CD4-positive, alpha-beta T cell (primary cell): ENCODE measurements at regions of chr16 and their contacts with region 1.

Region 1: GRCh38 chr16:86554917-86555703 is at the start of gene MTHFSD:
- DNase-seq: peak; percentile 90 to 99 (median 96)
- ATAC-seq: peak; percentile 93
- H3K4me3 ChIP-seq: peak within 1 kb of the TSS; percentile 96
- H3K4me3 Mint-ChIP-seq: peak within 1 kb of the TSS; percentile 99
- H3K27ac ChIP-seq: peak within 1 kb of the TSS; percentile 77 to 93
- H3K27ac Mint-ChIP-seq: peak within 1 kb of the TSS; percentile 99
- H3K4me1 ChIP-seq: peaks cover 22% of the 10 kb centered on the region
- H3K4me1 Mint-ChIP-seq: peaks cover 29% of the 10 kb centered on the region
- H3K27me3 ChIP-seq: peaks cover 3 to 16% of the 10 kb centered on the region in 2 experiments
- H3K27me3 Mint-ChIP-seq: peaks cover 23% of the 10 kb centered on the region
- CTCF ChIP-seq: no peak
- total RNA-seq, gene MTHFSD: 7.3 to 7.9 TPM

Region 2: GRCh38 chr16:85799497-85800337 is 755.4 kb before region 1 on chr16 and contains the starts of genes COX4I1 and EMC8:
- CTCF ChIA-PET with region 1: no interaction called
- POLR2A ChIA-PET with region 1: no interaction called
- intact Hi-C with region 1: loop called in 1 of 2 experiments (anchors 10 kb)
- DNase-seq: peak; percentile 85 to 96 (median 90)
- ATAC-seq: peak; percentile 79
- H3K4me3 ChIP-seq: peak within 1 kb of the TSS; percentile 84
- H3K4me3 Mint-ChIP-seq: peak within 1 kb of the TSS; percentile 97
- H3K27ac ChIP-seq: peak within 1 kb of the TSS; percentile 61 to 95
- H3K27ac Mint-ChIP-seq: peak within 1 kb of the TSS; percentile 99
- H3K4me1 ChIP-seq: peaks cover 40% of the 10 kb centered on the region
- H3K4me1 Mint-ChIP-seq: peaks cover 78% of the 10 kb centered on the region
- H3K27me3 ChIP-seq: no peaks in the 10 kb centered on the region
- H3K27me3 Mint-ChIP-seq: no peaks in the 10 kb centered on the region
- CTCF ChIP-seq: no peak
- total RNA-seq, gene COX4I1: 749 to 750 TPM
- total RNA-seq, gene EMC8: 38.9 to 41.7 TPM